Testis (tissue), 5 donors: ENCODE measurements at regions of chr18 and their contacts with region 1.

Region 1: DNA sequence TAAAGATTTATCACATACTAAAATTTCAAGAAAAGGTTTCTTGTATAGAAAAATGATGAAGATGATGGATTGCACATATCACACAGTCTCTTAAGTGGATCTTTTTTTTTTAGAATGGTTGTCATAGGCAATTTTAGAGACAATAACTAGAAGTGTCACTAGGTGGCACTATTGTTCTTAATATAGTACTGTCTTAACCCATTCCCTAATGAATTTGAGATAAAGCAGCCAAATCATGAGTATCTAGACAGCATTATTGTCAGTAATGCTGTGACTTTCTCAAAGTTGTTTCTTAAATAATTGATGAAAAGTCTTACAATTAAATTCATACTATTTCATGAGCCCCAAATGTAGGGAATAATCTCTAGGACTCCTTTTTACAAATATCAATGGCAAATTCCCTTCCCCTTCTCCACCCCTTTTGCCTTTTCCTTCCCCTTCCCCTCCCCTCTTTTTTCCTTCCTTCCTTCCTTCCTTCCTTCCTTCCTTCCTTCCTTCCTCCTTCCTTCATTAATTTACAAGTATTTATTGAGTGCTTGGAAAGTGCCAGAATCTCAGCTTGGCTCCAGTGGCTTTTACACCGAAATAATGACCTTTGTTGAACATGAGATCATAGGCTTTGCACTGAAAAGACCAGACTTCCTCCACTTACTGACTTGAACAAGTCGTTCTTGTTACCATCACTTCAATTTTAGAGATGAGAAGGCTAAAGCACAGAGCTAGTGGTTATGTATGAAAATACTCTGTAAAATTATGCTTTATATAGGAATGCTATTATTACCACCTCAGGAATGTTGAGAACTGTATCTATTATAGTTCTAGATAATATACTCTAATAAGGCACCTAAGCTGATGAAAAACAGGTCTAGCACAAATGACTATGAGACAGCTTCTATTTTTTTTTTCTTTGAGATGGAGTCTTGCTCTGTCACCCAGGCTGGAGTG is 19.8 kb downstream of the MYL12B start:
- DNase-seq: no peak
- H3K4me3 ChIP-seq: no peak overlapping the region
- H3K27ac ChIP-seq: no peak overlapping the region
- H3K4me1 ChIP-seq: no peaks in the 10 kb centered on the region
- H3K27me3 ChIP-seq: no peaks in the 10 kb centered on the region
- CTCF ChIP-seq: peak; percentile 63 to 74 (median 68)
- POLR2A ChIP-seq: no peak

Region 2: GRCh38 chr18:3447895-3448837 is 166.4 kb after region 1 on chr18:
- intact Hi-C with region 1: loop called (anchors 10 kb)
- DNase-seq: peak; percentile 95
- H3K4me3 ChIP-seq: peak overlapping the region; percentile 80 to 96
- H3K27ac ChIP-seq: peak overlapping the region; percentile 97 to 98
- H3K4me1 ChIP-seq: peaks cover 18% of the 10 kb centered on the region
- H3K27me3 ChIP-seq: no peaks in the 10 kb centered on the region
- CTCF ChIP-seq: peak in 1 of 3 experiments; percentile 5
- POLR2A ChIP-seq: peak; percentile 10

Region 3: GRCh38 chr18:3585656-3586509 is 304.2 kb after region 1 on chr18:
- intact Hi-C with region 1: loop called (anchors 5 kb)
- DNase-seq: peak; percentile 89
- H3K4me3 ChIP-seq: no peak overlapping the region
- H3K27ac ChIP-seq: peak overlapping the region; percentile 19 to 50
- H3K4me1 ChIP-seq: peaks cover 14% of the 10 kb centered on the region
- H3K27me3 ChIP-seq: no peaks in the 10 kb centered on the region
- CTCF ChIP-seq: peak; percentile 59 to 77 (median 63)
- POLR2A ChIP-seq: no peak

Region 4: DNA sequence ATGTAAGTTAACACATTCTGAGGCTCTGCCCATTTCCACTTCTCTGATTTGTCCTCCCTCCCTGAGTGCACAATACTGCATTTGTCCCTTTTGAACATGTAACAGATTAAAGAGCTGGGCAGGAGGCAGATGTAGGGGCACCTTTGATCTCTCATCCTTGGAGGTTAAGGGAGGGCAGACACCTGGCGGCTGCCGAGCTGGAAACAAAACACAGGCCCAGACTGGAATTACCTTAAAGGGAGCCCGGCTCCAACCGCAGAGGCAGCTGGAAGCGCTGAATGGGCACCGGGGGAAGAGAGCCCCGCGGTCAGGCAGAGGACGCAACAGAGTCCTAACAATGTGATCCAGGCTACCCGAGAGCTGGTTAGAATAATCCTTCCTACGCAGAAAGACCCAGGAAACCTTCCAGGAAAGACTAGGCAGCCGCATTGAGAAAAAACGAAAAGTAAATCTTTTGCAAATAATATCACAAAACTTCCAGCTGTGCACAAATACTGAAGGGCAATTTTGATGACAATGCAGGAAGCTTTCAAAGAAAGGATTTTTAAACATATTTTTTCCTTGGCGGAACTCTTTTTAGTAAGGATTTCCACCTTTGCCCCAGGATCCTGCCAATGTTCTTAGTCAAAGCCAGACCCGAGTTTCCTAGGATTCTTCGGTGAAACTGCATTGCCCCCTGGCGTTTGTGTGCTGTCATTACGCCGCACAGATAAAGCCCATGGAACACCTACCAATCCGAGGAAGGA is 384.2 kb after region 1 on chr18:
- intact Hi-C with region 1: loop called (anchors 5 kb)
- DNase-seq: peak; percentile 90
- H3K4me3 ChIP-seq: peak overlapping the region in 1 of 2 donors; percentile 42
- H3K27ac ChIP-seq: peak overlapping the region; percentile 38 to 47
- H3K4me1 ChIP-seq: peaks cover 20% of the 10 kb centered on the region
- H3K27me3 ChIP-seq: no peaks in the 10 kb centered on the region
- CTCF ChIP-seq: peak; percentile 95 to 98 (median 97)
- POLR2A ChIP-seq: no peak